Caco-2 (cell line): ENCODE measurements at regions of chr18 and their contacts with region 1.

Region 1: DNA sequence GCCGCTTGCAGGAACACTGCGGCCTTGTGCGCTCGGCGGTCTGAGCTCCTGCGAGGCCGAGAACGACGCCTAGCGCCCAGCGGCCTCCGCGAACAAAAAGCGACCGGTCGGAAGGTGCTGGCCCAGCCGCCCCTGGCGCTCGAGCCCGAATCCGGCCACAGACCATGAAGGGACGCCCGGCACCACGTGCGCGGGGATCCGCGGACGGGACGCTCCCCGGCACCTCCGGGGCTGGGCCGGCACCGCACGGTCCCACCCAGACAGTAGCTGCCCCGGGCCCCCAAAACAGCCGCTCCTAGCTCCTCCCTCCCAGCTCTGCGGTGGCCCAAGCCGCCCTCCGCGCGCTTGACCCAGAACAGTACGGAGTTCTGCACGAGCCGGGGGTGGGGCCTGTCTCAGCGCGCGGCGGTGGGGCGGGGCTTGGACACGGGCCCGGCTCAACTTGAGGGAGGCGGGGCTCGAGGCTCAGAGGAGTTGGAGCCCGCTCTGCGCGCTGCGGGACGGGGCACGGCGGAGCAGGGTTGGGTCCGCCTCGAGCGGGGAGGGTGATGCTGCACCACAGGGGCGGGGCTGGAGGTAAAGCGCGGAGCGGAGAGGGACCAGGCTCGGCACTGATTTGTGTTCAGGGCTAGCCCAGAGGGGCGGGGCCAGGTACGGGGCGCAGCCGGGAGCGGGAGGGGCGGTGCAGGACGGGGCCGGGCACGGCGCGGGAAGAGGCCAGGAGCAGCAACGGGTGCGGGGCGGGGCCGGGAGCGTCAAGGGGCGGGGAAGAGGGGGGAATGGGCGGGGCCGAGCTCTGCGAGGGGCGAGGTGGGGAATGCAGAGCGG is 538 bp upstream of the IMPA2 start:
- DNase-seq: peak; percentile 100
- H3K4me3 ChIP-seq: peak overlapping the region; percentile 85
- H3K4me3 Mint-ChIP-seq: peak overlapping the region; percentile 92
- H3K27ac Mint-ChIP-seq: peak overlapping the region; percentile 97
- H3K4me1 ChIP-seq: peaks cover 22% of the 10 kb centered on the region
- H3K4me1 Mint-ChIP-seq: no peaks in the 10 kb centered on the region
- H3K27me3 ChIP-seq: no peaks in the 10 kb centered on the region
- H3K27me3 Mint-ChIP-seq: no peaks in the 10 kb centered on the region
- CTCF ChIP-seq: peak in 1 of 2 experiments; percentile 23

Region 2: DNA sequence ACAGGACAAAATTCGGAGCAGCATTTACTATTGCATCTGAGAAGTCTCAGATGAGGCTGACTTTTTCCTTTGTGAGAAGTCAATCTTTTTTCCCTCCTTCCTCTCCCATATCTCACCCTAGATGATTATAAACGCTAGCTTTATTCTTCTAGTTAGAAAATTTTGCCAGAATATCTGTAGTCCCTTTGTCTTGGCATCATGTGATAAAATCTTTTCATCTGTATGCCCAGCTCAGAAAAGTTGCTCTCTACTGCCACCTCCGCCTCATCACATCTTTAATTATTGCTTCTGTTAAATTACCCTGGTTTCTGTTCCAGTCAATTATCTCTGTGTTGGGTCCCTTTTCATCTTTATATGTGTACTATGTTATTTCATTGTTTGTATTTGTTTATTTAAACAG is 582.1 kb before region 1 on chr18:
- CTCF ChIA-PET with region 1: no interaction called
- POLR2A ChIA-PET with region 1: no interaction called
- intact Hi-C with region 1: no loop called
- DNase-seq: no peak
- H3K4me3 ChIP-seq: no peak overlapping the region
- H3K4me3 Mint-ChIP-seq: no peak overlapping the region
- H3K27ac Mint-ChIP-seq: no peak overlapping the region
- H3K4me1 ChIP-seq: no peaks in the 10 kb centered on the region
- H3K4me1 Mint-ChIP-seq: no peaks in the 10 kb centered on the region
- H3K27me3 ChIP-seq: no peaks in the 10 kb centered on the region
- H3K27me3 Mint-ChIP-seq: no peaks in the 10 kb centered on the region
- CTCF ChIP-seq: no peak

Region 3: GRCh38 chr18:11840493-11840892 is 140.3 kb before region 1 on chr18:
- CTCF ChIA-PET with region 1: interaction called, 4 read pairs
- POLR2A ChIA-PET with region 1: interaction called, 29 read pairs
- intact Hi-C with region 1: no loop called
- DNase-seq: peak; percentile 94 to 96
- H3K4me3 ChIP-seq: no peak overlapping the region
- H3K4me3 Mint-ChIP-seq: peak overlapping the region; percentile 65
- H3K27ac Mint-ChIP-seq: peak overlapping the region; percentile 98
- H3K4me1 ChIP-seq: peaks cover 59% of the 10 kb centered on the region
- H3K4me1 Mint-ChIP-seq: peaks cover 40% of the 10 kb centered on the region
- H3K27me3 ChIP-seq: no peaks in the 10 kb centered on the region
- H3K27me3 Mint-ChIP-seq: no peaks in the 10 kb centered on the region
- CTCF ChIP-seq: peak; percentile 26 to 33

Region 4: DNA sequence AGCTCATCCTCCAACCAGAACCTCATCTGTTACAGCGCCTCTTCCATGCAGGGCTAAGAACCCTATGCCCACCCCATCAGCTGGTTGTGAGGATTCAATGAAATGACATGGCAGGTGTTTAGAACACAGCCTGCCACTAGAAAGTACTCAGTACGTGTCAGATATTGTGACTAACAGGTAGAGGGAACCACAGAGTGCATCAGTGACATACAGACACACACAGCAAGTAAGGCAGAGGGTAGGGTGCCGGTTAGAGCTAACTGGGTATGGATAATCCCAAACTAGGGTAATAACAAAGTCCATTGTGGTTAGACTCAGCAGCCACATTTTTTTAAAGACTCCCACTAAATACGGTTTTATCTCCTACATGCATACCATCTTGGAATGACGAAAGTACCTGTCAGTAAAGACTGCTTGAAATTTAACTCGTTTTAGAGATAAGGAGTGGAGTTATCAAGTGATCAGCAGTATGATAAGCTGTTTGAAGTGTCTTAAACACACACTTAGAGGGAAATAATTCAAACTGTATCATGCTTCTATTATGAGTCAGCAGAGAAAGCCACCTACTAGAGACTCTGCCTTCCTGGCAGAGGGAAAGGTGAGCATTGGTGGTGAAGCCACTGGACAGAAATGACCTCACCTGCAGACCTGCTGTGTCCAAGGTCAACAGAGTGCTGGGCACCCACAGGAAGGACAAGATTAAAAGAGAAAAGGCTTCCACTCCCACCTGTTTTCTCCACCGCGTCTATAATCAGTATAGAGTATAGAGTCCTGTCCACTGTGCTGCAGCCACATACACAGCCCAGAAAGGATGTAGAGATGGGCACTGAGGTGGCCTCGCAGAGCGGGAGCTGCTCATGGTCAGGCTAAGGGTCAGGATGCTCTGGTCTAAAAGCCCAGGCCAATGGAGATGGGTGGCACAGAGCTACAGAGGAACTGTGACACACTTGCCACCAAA is 93.2 kb before region 1 on chr18:
- CTCF ChIA-PET with region 1: interaction called, 5 read pairs
- POLR2A ChIA-PET with region 1: interaction called, 6 read pairs
- intact Hi-C with region 1: loop called (anchors 2 kb)
- DNase-seq: peak; percentile 82 to 89
- H3K4me3 ChIP-seq: no peak overlapping the region
- H3K4me3 Mint-ChIP-seq: peak overlapping the region; percentile 12
- H3K27ac Mint-ChIP-seq: peak overlapping the region; percentile 78
- H3K4me1 ChIP-seq: peaks cover 54% of the 10 kb centered on the region
- H3K4me1 Mint-ChIP-seq: peaks cover 34% of the 10 kb centered on the region
- H3K27me3 ChIP-seq: no peaks in the 10 kb centered on the region
- H3K27me3 Mint-ChIP-seq: no peaks in the 10 kb centered on the region
- CTCF ChIP-seq: no peak

Region 5: GRCh38 chr18:11937874-11938478 is 42.8 kb before region 1 on chr18:
- CTCF ChIA-PET with region 1: interaction called, 8 read pairs
- POLR2A ChIA-PET with region 1: interaction called, 5 read pairs
- intact Hi-C with region 1: loop called (anchors 1 kb)
- DNase-seq: peak; percentile 67 to 83
- H3K4me3 ChIP-seq: no peak overlapping the region
- H3K4me3 Mint-ChIP-seq: no peak overlapping the region
- H3K27ac Mint-ChIP-seq: no peak overlapping the region
- H3K4me1 ChIP-seq: no peaks in the 10 kb centered on the region; the same call in 1 of the 2 replicates
- H3K4me1 Mint-ChIP-seq: no peaks in the 10 kb centered on the region
- H3K27me3 ChIP-seq: no peaks in the 10 kb centered on the region
- H3K27me3 Mint-ChIP-seq: no peaks in the 10 kb centered on the region
- CTCF ChIP-seq: peak; percentile 76 to 79

Region 6: GRCh38 chr18:11995445-11996189 is 14.8 kb after region 1 on chr18:
- CTCF ChIA-PET with region 1: interaction called, 49 read pairs
- POLR2A ChIA-PET with region 1: interaction called, 35 read pairs
- intact Hi-C with region 1: loop called (anchors 1 kb)
- DNase-seq: peak; percentile 71 to 73
- H3K4me3 ChIP-seq: no peak overlapping the region
- H3K4me3 Mint-ChIP-seq: no peak overlapping the region
- H3K27ac Mint-ChIP-seq: peak overlapping the region; percentile 84
- H3K4me1 ChIP-seq: peaks cover 16% of the 10 kb centered on the region
- H3K4me1 Mint-ChIP-seq: peaks cover 29% of the 10 kb centered on the region
- H3K27me3 ChIP-seq: no peaks in the 10 kb centered on the region
- H3K27me3 Mint-ChIP-seq: no peaks in the 10 kb centered on the region
- CTCF ChIP-seq: peak; percentile 69 to 84